Thyroid gland (tissue), 4 donors: ENCODE measurements at regions of chr2 and their contacts with region 1.

Region 1: DNA sequence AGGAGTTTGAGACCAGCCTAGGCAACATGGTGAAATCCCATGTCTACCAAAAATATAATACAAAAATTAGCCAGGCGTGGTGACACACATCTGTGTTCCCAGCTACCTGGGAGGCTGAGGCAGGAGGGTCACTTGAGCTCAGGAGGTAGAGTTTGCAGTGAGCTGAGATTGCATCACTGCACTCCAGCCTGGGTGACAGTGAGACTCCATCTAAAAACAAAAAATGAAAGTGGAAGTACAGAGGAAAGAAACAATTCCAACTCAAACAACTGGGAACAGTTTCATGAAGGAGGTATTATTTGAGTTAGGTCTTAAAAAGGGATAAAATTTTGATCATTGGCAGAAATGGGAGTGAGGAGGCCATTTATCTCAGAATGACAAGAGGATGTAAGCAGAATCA is 6.3 kb upstream of the RAB1A start:
- DNase-seq: no peak
- H3K4me3 ChIP-seq: no peak overlapping the region
- H3K27ac ChIP-seq: no peak overlapping the region
- H3K4me1 ChIP-seq: peaks cover 0 to 11% of the 10 kb centered on the region in 2 donors
- H3K27me3 ChIP-seq: no peaks in the 10 kb centered on the region
- CTCF ChIP-seq: no peak
- POLR2A ChIP-seq: no peak

Region 2: GRCh38 chr2:64945973-64946768 is 190.1 kb before region 1 on chr2:
- intact Hi-C with region 1: no loop called
- DNase-seq: no peak
- H3K4me3 ChIP-seq: no peak overlapping the region
- H3K27ac ChIP-seq: no peak overlapping the region
- H3K4me1 ChIP-seq: no peaks in the 10 kb centered on the region
- H3K27me3 ChIP-seq: no peaks in the 10 kb centered on the region
- CTCF ChIP-seq: no peak
- POLR2A ChIP-seq: no peak

Region 3: GRCh38 chr2:64988420-64989125 is 147.7 kb before region 1 on chr2:
- intact Hi-C with region 1: no loop called
- DNase-seq: peak; percentile 36 to 40
- H3K4me3 ChIP-seq: peak overlapping the region; percentile 18 to 76 (median 47)
- H3K27ac ChIP-seq: peak overlapping the region; percentile 75 to 92 (median 89)
- H3K4me1 ChIP-seq: peaks cover 0 to 11% of the 10 kb centered on the region in 2 donors
- H3K27me3 ChIP-seq: no peaks in the 10 kb centered on the region
- CTCF ChIP-seq: peak in 4 of 6 experiments; percentile 20 to 47 (median 28)
- POLR2A ChIP-seq: peak in 1 of 2 donors; percentile 35

Region 4: DNA sequence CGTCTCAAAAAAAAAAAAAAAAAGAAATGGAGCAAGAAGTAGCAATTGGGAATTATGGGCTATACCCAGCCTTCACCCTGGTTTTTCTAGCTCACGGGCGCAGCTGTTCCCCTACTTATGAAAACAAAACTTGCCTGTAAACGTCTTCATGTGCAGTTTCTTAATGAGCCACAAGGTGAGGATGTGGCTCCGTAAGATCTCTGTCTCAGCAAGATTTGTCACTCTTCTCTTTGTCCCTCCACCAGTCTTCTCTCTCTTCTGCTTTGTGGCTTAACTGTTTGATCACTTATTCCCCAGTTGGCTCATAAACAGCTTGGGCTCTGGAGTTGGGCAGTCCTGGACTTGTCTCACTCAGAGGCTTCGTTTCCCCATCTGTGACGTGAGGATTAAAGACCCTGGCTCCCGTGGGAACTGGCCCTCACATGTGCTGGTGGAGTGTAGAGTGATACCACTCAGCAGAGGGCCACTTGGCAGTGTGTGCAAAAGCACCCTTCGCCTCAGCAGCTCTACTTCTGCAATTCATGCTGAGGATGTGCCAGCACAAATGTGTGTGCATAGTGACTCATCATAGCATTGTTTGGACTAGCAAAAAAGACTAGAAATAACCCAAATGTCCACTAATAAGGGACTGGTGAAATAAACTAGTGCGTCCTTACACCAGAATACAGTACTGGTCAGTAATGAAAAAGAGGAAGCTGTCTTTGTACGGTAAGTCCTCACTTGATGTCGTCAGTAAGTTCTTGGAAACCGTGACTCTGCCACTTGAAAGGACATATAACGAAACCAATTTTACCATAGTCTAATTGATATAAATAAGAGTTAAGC is 71.3 kb before region 1 on chr2:
- intact Hi-C with region 1: loop called (anchors 5 kb)
- DNase-seq: peak; percentile 86 to 88
- H3K4me3 ChIP-seq: no peak overlapping the region
- H3K27ac ChIP-seq: peak overlapping the region; percentile 46 to 80 (median 69)
- H3K4me1 ChIP-seq: peaks cover 36 to 79% of the 10 kb centered on the region in 2 donors
- H3K27me3 ChIP-seq: no peaks in the 10 kb centered on the region
- CTCF ChIP-seq: peak; percentile 55 to 99 (median 86)
- POLR2A ChIP-seq: peak in 1 of 2 donors; percentile 24